Adrenal gland (tissue), 19 donors: ENCODE measurements at regions of chr1 and their contacts with region 1.

Region 1: DNA sequence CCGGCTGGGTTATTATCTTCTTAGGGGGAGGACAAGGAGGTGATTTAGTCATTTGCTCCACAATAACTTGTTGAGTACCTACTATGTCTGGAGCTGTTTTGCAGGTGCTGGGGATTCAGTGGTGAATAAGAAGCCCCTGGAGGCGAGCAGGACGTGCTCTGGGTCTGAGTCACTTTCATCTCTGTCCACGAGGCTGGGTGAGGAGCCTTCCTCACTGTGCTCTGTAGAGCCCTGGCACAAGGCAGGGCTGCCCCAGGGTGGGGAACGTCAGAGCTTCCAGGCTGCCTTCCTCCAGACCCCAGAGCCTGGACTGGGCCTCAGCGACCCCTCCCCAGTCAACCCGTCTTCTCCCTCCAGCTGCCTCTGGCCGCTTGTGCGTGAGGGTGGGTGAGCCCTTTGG is 2.5 kb upstream of the PADI6 start:
- DNase-seq: no peak
- H3K4me3 ChIP-seq: no peak overlapping the region
- H3K27ac ChIP-seq: no peak overlapping the region
- H3K4me1 ChIP-seq: no peaks in the 10 kb centered on the region
- H3K27me3 ChIP-seq: no peaks in the 10 kb centered on the region
- CTCF ChIP-seq: no peak
- POLR2A ChIP-seq: no peak

Region 2: DNA sequence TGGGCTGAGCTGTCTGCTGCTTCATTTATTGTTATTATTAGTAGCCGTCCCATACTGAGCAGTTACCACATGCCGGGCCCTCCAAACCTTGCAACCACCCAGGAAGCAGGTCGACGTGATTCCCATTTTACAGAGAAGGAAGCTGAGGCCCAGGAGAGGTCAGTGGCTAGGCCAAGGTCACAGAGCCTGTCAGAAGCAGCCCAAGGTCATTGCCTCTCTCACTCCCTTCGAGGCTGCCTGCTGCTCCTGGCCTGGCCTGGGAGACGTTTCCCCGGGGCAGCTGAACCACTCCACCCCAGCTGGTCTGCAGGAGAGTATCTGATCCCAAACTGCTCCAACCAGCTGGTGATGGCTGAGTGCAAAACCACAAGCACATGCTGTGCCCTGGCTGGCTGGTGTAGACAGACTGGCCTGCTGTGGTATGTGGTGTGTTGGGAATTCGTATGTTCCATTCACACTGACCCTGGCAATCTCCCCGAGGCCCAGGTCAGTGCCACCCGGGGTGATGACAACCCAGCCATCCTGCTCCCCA is 54.9 kb before region 1 on chr1:
- intact Hi-C with region 1: no loop called
- DNase-seq: no peak
- H3K4me3 ChIP-seq: no peak overlapping the region
- H3K27ac ChIP-seq: no peak overlapping the region
- H3K4me1 ChIP-seq: no peaks in the 10 kb centered on the region
- H3K27me3 ChIP-seq: peaks cover 6% of the 10 kb centered on the region
- CTCF ChIP-seq: no peak
- POLR2A ChIP-seq: no peak

Region 3: DNA sequence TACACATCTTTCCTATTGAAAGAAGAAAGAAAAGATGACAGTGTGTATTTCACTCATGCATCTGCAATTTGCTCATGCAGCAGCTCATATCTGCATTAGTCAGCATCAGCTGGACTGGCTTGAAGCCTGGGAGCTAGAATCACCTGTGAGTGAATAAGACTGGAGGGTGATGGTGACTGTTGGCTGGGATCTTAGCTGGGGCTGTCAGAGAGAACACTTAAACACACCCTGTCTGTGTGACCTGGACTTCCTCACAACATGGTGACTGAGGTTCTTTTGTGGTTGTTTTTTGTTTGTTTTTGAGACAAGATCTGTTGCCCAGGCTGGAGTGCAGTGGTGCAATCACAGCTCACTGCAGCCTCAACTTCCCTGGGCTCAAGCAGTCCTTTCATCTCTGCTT is 1136.2 kb after region 1 on chr1:
- intact Hi-C with region 1: loop called in 1 of 2 experiments (anchors 10 kb)
- DNase-seq: no peak
- H3K4me3 ChIP-seq: no peak overlapping the region
- H3K27ac ChIP-seq: no peak overlapping the region
- H3K4me1 ChIP-seq: no peaks in the 10 kb centered on the region
- H3K27me3 ChIP-seq: peaks cover 4% of the 10 kb centered on the region
- CTCF ChIP-seq: no peak
- POLR2A ChIP-seq: no peak